ENCODE measurements at regions of chr21 and their contacts with region 1.

Region 1: DNA sequence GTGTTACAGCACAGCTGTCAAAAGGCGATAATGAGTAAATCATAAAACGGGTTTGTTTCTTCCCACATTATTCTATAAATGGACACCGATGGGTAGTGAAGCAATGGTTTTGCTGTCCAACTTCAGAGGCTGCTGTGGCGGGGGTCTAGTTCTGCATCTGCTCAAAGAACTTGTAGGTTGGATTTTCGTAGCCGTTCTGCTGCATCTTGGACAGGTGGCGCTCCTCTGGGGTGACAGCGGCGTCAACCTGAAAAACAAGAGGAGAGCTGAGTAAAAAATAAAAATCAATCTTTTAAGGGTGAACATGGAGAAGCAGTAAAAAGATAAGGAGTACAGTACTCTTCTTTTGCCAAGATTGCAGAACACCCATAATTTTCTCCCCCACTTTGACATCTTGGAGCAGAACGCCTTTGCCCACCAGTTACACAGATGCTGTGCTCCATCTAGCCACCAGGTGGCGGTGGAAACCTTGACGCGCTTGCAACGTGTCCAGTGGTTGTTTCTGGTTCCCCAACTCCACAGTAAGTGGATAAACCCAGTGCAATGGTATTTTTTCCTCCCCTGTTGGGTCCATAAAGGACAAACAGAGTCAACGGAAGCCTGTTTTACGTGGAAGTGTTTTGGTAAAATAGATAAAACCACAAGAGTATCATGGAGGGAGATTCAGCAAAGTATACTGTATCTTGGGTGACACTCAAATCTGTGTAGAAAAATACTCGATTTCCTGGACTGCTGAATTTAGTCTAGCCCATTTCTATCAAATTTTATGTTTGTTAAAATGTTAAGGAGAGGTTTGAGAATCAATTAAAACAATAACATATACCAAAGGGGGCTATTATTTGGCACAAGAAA is 147.0 kb downstream of the GABPA start:
- DNase-seq: no peak
- H3K4me3 ChIP-seq: no peak overlapping the region
- H3K27ac ChIP-seq: no peak overlapping the region
- H3K4me1 ChIP-seq: peaks cover 0 to 12% (median 6%) of the 10 kb centered on the region in 4 donors
- H3K27me3 ChIP-seq: no peaks in the 10 kb centered on the region
- CTCF ChIP-seq: peak; percentile 81 to 96 (median 94)
- EP300 ChIP-seq: no peak
- POLR2A ChIP-seq: no peak

Region 2: GRCh38 chr21:25370311-25370744 is 511.4 kb before region 1 on chr21:
- intact Hi-C with region 1: no loop called
- DNase-seq: no peak
- H3K4me3 ChIP-seq: no peak overlapping the region
- H3K27ac ChIP-seq: no peak overlapping the region
- H3K4me1 ChIP-seq: peaks cover 0 to 5% (median 2%) of the 10 kb centered on the region in 4 donors
- H3K27me3 ChIP-seq: no peaks in the 10 kb centered on the region
- CTCF ChIP-seq: no peak
- EP300 ChIP-seq: no peak
- POLR2A ChIP-seq: no peak

Region 3: GRCh38 chr21:26715878-26716506 is 834.2 kb after region 1 on chr21:
- intact Hi-C with region 1: loop called (anchors 10 kb)
- DNase-seq: no peak
- H3K4me3 ChIP-seq: no peak overlapping the region
- H3K27ac ChIP-seq: no peak overlapping the region
- H3K4me1 ChIP-seq: peaks cover 0 to 4% (median 0%) of the 10 kb centered on the region in 4 donors
- H3K27me3 ChIP-seq: no peaks in the 10 kb centered on the region
- CTCF ChIP-seq: peak; percentile 60 to 88 (median 71)
- EP300 ChIP-seq: no peak
- POLR2A ChIP-seq: no peak